Endothelial cell of umbilical vein (primary cell): ENCODE measurements at regions of chr6 and their contacts with region 1.

Region 1: GRCh38 chr6:13355043-13355951 is 27.0 kb upstream of the TBC1D7 start:
- DNase-seq: peak; percentile 69
- H3K4me3 ChIP-seq: no peak overlapping the region
- H3K27ac ChIP-seq: peak overlapping the region; percentile 89
- H3K4me1 ChIP-seq: peaks cover 28% of the 10 kb centered on the region
- H3K27me3 ChIP-seq: no peaks in the 10 kb centered on the region
- CTCF ChIP-seq: no peak
- POLR2A ChIP-seq: no peak

Region 2: DNA sequence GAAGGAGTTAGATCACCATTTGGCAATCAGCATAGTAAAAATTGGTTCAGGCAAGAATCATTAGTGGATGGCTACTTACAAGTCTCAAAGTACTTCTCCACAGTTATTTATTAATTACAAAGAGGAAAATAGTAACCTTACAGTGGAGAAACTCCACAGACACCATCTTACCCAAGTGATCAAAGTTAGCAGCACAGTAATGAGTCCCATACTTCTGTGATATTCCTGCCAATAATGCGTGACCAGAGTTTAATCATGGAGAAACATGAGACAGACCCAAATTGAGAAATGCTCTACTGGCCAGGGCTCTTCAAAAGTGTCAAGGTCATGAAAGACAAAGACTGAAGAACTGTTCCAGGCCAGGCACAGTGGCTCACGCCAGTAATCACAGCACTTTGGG is 36.5 kb before region 1 on chr6:
- CTCF ChIA-PET with region 1: no interaction called
- POLR2A ChIA-PET with region 1: no interaction called
- dilution Hi-C with region 1: no loop called
- intact Hi-C with region 1: no loop called
- DNase-seq: no peak
- H3K4me3 ChIP-seq: no peak overlapping the region
- H3K27ac ChIP-seq: no peak overlapping the region
- H3K4me1 ChIP-seq: no peaks in the 10 kb centered on the region
- H3K27me3 ChIP-seq: no peaks in the 10 kb centered on the region
- CTCF ChIP-seq: no peak
- POLR2A ChIP-seq: no peak

Region 3: GRCh38 chr6:13373488-13373886 is 18.2 kb after region 1 on chr6:
- CTCF ChIA-PET with region 1: interaction called, 11 read pairs
- POLR2A ChIA-PET with region 1: interaction called, 4 read pairs
- dilution Hi-C with region 1: no loop called
- intact Hi-C with region 1: loop called (anchors 1 kb)
- DNase-seq: peak; percentile 67
- H3K4me3 ChIP-seq: no peak overlapping the region
- H3K27ac ChIP-seq: no peak overlapping the region
- H3K4me1 ChIP-seq: peaks cover 12% of the 10 kb centered on the region
- H3K27me3 ChIP-seq: no peaks in the 10 kb centered on the region
- CTCF ChIP-seq: no peak
- POLR2A ChIP-seq: no peak

Region 4: GRCh38 chr6:13422681-13423221 is 67.5 kb after region 1 on chr6:
- CTCF ChIA-PET with region 1: interaction called, 3 read pairs
- POLR2A ChIA-PET with region 1: no interaction called
- dilution Hi-C with region 1: no loop called
- intact Hi-C with region 1: loop called (anchors 2 kb)
- DNase-seq: peak; percentile 95
- H3K4me3 ChIP-seq: peak overlapping the region in 1 of 3 experiments; percentile 19
- H3K27ac ChIP-seq: peak overlapping the region; percentile 92
- H3K4me1 ChIP-seq: peaks cover 44% of the 10 kb centered on the region
- H3K27me3 ChIP-seq: no peaks in the 10 kb centered on the region
- CTCF ChIP-seq: no peak
- POLR2A ChIP-seq: no peak

Region 5: GRCh38 chr6:13526727-13527670 is 171.7 kb after region 1 on chr6:
- CTCF ChIA-PET with region 1: no interaction called
- POLR2A ChIA-PET with region 1: no interaction called
- dilution Hi-C with region 1: no loop called
- intact Hi-C with region 1: loop called (anchors 2 kb)
- DNase-seq: peak; percentile 94
- H3K4me3 ChIP-seq: no peak overlapping the region
- H3K27ac ChIP-seq: peak overlapping the region; percentile 65
- H3K4me1 ChIP-seq: peaks cover 37% of the 10 kb centered on the region
- H3K27me3 ChIP-seq: no peaks in the 10 kb centered on the region
- CTCF ChIP-seq: no peak
- POLR2A ChIP-seq: peak; percentile 63

Region 6: GRCh38 chr6:13538084-13538483 is 182.8 kb after region 1 on chr6:
- CTCF ChIA-PET with region 1: interaction called, 19 read pairs
- POLR2A ChIA-PET with region 1: no interaction called
- dilution Hi-C with region 1: no loop called
- intact Hi-C with region 1: loop called (anchors 1 kb)
- DNase-seq: peak; percentile 68
- H3K4me3 ChIP-seq: no peak overlapping the region
- H3K27ac ChIP-seq: no peak overlapping the region
- H3K4me1 ChIP-seq: peaks cover 9% of the 10 kb centered on the region
- H3K27me3 ChIP-seq: no peaks in the 10 kb centered on the region
- CTCF ChIP-seq: peak; percentile 23 to 25
- POLR2A ChIP-seq: no peak